Activated naive CD4-positive, alpha-beta T cell treated with anti-CD3 and anti-CD28 coated beads for 36 hours (primary cell): ENCODE measurements at regions of chr20 and their contacts with region 1.

Region 1: GRCh38 chr20:44532259-44532980 is 10.6 kb upstream of the SERINC3 start:
- DNase-seq: no peak
- H3K4me3 Mint-ChIP-seq: no peak overlapping the region
- H3K27ac Mint-ChIP-seq: no peak overlapping the region
- H3K4me1 Mint-ChIP-seq: peaks cover 4% of the 10 kb centered on the region
- H3K27me3 Mint-ChIP-seq: no peaks in the 10 kb centered on the region

Region 2: GRCh38 chr20:44552950-44553908 is 20.8 kb after region 1 on chr20:
- CTCF ChIA-PET with region 1: no interaction called
- intact Hi-C with region 1: loop called (anchors 2 kb)
- DNase-seq: no peak
- H3K4me3 Mint-ChIP-seq: no peak overlapping the region
- H3K27ac Mint-ChIP-seq: peak overlapping the region; percentile 57
- H3K4me1 Mint-ChIP-seq: peaks cover 19% of the 10 kb centered on the region
- H3K27me3 Mint-ChIP-seq: no peaks in the 10 kb centered on the region